ENCODE measurements at regions of chr1 and their contacts with region 1.

Region 1: GRCh38 chr1:156499842-156500546 is 581 bp downstream of the MEF2D start:
- DNase-seq: peak; percentile 89

Region 2: GRCh38 chr1:156461781-156462647 is 38.0 kb before region 1 on chr1:
- intact Hi-C with region 1: loop called in 1 of 2 experiments (anchors 5 kb)
- DNase-seq: no peak

Region 3: GRCh38 chr1:156480411-156481192 is 19.4 kb before region 1 on chr1:
- intact Hi-C with region 1: no loop called
- DNase-seq: peak; percentile 90

Region 4: DNA sequence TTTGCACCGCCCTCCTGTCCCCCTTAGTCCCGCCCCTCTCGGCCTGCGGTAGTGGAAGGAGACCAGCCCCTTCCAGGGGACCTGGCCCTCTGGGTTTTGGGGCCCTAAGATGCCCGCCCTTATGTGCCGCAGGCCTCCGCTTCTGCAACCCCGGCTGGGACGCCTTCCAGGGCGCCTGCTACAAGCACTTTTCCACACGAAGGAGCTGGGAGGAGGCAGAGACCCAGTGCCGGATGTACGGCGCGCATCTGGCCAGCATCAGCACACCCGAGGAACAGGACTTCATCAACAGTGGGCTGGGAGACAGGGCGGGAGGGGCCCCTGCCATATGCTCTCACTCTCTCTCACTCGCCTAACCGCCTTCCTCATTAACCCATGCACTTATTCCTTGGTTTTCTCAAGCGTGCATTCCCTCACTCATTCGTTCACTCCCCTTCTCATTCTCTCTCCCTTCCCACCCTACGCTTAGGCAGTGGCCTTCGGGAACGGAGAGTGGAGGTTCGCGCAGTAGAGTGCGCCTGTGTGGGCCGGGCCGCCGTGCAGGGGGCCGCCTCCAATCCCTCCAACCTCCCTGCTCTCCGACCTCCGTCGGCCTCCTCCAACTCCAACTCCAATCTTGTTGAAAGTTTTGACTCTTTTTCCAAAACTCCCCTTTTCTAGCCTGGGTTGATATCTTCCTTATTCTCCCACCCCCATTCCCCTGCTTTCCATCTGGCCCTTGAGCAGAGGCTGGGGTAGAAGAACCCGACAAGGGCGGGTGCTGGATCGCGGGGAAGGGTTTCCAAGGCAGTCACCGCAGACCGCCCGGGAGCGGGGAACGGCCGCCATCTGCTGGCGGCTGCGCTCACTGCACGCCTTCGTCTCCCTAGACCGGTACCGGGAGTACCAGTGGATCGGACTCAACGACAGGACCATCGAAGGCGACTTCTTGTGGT is 157.1 kb after region 1 on chr1:
- intact Hi-C with region 1: no loop called
- DNase-seq: peak; percentile 94

Measured in posterior vena cava (tissue), 2 donors.